ENCODE measurements at regions of chr3 and their contacts with region 1.

Region 1: DNA sequence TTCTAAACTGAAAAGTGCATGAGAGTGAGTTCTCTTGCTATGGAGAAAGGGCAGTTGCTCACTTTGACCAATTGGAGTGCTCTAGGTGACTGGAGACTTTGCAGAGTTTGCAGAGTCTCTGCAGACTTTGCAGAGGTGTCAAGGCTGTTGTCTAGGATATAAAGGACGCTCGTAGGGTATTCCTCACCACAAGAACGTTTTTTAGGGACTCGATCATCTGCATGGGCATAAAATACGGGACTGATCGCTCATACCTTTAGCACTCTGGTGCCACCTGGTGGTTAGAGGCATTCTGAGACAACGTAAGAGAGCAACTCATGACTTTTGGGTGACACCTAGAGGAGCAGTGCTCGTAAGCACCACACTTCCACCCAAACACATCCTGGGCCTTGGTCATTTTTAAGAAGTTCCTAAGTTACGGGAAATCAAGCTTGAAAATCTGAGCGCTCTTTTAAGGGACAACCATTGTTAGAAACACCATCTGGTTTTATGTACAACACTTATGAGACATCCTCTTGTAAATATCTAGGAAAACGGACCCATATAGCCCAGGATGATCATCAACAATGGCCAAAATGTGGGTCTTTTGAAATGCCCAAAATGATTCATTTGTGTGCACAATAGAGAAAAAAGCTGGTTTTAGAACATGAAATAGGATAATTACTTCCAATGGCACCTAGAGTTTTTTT is 51.6 kb upstream of the XCR1 start:
- DNase-seq: peak; percentile 95
- H3K4me3 ChIP-seq: no peak overlapping the region
- CTCF ChIP-seq: peak; percentile 98

Region 2: DNA sequence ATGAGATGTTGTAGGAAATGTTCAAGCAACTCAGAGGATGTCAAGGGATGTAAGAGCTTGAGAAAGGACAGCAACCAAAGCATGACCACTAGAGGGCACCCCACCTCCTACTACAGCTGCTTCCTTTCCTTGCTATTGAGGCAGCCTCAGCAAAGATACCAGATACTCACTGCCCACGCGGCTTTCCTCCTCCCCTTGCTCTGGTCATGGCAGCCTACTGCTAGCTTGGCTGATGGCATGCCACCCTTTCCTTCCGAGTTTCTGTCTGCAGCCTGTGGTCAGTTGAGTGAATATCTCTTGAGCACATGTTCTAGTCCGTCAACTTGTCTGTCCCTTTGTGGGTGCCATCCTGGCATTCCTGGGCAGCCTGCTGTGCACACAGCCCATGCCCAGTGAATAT is 140.0 kb before region 1 on chr3:
- in situ Hi-C with region 1: loop called (anchors 25 kb)
- DNase-seq: peak; percentile 87
- H3K4me3 ChIP-seq: no peak overlapping the region
- CTCF ChIP-seq: peak; percentile 89

Region 3: DNA sequence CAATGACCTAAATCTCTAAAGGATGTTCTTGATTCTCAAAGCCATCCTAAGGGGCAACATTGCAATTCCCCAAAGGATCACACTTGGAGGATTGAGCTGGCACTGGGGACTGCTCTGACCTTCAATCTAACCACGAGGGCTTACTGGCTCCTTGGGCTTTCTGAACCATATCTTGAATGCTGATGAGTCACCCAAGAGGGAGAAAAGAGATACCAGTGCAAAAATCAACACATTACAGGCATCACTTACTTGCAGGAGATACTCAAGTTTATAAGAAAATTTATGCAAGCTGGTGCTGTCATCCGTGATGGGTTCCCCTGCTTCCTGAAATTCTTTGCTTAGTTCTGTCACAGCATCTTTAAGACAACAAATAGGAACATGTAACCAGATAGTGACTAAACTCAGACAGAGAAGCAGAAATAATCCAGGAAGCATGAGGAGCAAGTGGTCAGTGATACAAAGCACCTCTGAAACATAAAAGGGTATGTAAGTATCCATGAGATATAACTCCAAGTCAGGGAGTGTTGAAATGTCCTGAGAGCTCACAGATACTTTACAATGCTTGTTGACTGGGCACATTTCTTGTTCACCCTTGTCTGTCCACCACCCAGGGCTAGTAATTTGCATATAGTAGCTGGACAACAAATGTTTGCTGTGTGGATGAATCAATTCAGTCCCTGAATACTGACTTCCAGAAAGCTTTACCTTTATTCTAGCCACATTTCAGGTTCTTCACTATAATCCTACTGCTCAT is 97.4 kb before region 1 on chr3:
- in situ Hi-C with region 1: loop called (anchors 5 kb)
- DNase-seq: no peak
- H3K4me3 ChIP-seq: no peak overlapping the region
- CTCF ChIP-seq: no peak

Region 4: DNA sequence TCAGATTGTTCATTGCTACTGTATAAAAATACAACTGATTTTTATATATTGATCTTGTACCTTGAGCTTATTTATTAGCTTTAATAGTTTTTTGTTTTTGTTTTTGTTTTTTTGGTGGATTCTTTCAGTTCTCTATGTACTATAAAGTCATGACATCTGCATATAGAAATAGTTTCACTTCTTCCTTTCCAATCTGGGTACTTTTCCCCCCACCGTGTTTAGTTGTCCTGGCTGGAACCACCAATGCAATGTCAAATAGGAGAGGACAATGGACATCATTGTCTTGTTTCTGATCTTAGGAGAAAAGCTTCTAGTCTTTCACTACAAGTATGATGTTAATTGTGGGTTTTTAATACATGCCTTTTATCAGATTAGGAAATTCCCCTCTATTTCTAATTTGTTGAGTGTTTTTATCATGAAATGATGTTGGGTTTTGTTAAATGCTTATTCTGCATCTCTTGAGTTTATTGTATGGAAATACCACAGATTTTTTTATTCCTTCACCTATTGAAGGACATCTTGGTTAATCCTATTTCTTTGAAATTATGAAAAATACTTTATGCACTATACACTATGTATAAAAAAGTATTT is 48.8 kb before region 1 on chr3:
- in situ Hi-C with region 1: loop called (anchors 5 kb)
- DNase-seq: no peak
- H3K4me3 ChIP-seq: no peak overlapping the region
- CTCF ChIP-seq: no peak

Region 5: GRCh38 chr3:46163318-46164041 is 84.6 kb after region 1 on chr3:
- in situ Hi-C with region 1: no loop called
- DNase-seq: no peak
- H3K4me3 ChIP-seq: no peak overlapping the region
- CTCF ChIP-seq: no peak